ENCODE measurements at regions of chr10 and their contacts with region 1.

Region 1: DNA sequence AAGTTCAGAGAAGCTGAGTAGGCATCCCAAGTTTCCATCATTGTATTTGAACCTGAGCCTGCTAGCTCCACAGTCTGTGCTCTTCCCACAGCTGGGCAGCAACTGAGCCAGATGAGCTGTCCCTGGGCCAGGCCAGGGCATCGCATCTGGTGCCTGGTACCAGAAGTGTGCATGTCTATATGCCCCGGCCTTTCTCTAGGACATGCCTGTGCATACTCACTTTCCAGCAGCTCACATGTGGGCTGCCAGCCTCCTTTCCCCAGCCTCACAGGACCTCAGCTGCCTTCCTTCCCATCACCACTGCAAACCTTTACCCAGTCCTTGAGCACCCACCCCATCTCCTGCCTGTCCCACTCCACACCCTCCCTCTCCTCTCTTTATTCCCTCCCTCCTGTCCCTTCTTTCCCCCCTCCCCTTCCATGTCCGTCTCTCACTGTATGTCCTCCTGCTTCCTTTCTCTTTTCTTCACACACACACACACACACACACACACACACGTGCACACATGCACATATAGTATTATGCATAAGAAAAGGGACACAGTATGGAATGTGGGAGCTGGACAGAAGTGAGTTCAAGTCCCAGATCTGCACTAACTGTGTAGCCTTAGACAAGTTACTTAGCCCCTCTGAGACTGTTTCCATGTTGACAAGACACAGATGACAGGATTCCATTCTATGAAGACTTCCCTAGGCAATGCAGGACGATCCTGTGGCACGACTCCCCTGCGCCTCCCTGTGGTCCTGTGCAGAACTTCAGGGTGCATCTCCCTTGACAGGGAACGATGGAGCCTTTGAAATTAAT is 10.9 kb downstream of the CDHR1 start:
- DNase-seq: peak; percentile 77 to 79 (median 78)
- ATAC-seq: peak; percentile 86
- H3K4me3 ChIP-seq: no peak overlapping the region
- H3K27ac ChIP-seq: no peak overlapping the region
- H3K4me1 ChIP-seq: peaks cover 13 to 15% of the 10 kb centered on the region in 2 experiments; a peak in 4 of 5 replicates
- H3K27me3 ChIP-seq: peaks cover 9 to 27% of the 10 kb centered on the region in 2 experiments
- CTCF ChIP-seq: peak; percentile 87 to 96 (median 95)
- EP300 ChIP-seq: no peak
- POLR2A ChIP-seq: no peak
- RAD21 ChIP-seq: peak; percentile 72 to 91

Region 2: DNA sequence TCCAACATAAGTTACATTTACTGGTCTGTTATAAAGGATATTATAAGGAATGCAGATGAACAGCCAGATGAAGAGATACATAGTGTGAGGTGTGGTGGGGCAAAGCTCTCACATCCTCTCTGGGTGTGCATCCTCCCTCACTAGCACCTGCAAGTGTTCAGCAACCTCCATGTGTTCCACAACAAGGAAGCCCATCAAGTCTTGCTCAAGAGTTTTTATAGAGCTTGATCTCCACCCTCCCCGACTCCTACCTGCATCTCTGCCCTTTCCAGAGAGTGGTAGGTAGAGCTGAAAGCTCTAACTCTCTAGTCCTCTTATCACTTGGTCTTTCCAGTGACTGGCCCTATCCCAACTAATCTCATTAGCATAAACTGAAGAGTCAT is 78.5 kb before region 1 on chr10:
- CTCF ChIA-PET with region 1: interaction called, 19 read pairs
- POLR2A ChIA-PET with region 1: interaction called, 5 read pairs
- in situ Hi-C with region 1: no loop called
- intact Hi-C with region 1: loop called (anchors 1 kb)
- DNase-seq: no peak
- ATAC-seq: no peak
- H3K4me3 ChIP-seq: no peak overlapping the region
- H3K27ac ChIP-seq: no peak overlapping the region
- H3K4me1 ChIP-seq: no peaks in the 10 kb centered on the region
- H3K27me3 ChIP-seq: peaks cover 0 to 4% of the 10 kb centered on the region in 2 experiments; a peak in 3 of 5 replicates
- CTCF ChIP-seq: no peak
- EP300 ChIP-seq: no peak
- POLR2A ChIP-seq: no peak
- RAD21 ChIP-seq: no peak

Region 3: GRCh38 chr10:84147347-84147746 is 57.9 kb before region 1 on chr10:
- CTCF ChIA-PET with region 1: interaction called, 12 read pairs
- POLR2A ChIA-PET with region 1: interaction called, 3 read pairs
- in situ Hi-C with region 1: no loop called
- intact Hi-C with region 1: loop called (anchors 2 kb)
- DNase-seq: no peak
- ATAC-seq: peak; percentile 47; the same call in 2 of the 3 replicates
- H3K4me3 ChIP-seq: no peak overlapping the region
- H3K27ac ChIP-seq: no peak overlapping the region
- H3K4me1 ChIP-seq: no peaks in the 10 kb centered on the region
- H3K27me3 ChIP-seq: no peaks in the 10 kb centered on the region
- CTCF ChIP-seq: no peak
- EP300 ChIP-seq: no peak
- POLR2A ChIP-seq: no peak
- RAD21 ChIP-seq: no peak

Measured in K562 (cell line).